SK-N-SH (cell line): ENCODE measurements at regions of chr12 and their contacts with region 1.

Region 1: DNA sequence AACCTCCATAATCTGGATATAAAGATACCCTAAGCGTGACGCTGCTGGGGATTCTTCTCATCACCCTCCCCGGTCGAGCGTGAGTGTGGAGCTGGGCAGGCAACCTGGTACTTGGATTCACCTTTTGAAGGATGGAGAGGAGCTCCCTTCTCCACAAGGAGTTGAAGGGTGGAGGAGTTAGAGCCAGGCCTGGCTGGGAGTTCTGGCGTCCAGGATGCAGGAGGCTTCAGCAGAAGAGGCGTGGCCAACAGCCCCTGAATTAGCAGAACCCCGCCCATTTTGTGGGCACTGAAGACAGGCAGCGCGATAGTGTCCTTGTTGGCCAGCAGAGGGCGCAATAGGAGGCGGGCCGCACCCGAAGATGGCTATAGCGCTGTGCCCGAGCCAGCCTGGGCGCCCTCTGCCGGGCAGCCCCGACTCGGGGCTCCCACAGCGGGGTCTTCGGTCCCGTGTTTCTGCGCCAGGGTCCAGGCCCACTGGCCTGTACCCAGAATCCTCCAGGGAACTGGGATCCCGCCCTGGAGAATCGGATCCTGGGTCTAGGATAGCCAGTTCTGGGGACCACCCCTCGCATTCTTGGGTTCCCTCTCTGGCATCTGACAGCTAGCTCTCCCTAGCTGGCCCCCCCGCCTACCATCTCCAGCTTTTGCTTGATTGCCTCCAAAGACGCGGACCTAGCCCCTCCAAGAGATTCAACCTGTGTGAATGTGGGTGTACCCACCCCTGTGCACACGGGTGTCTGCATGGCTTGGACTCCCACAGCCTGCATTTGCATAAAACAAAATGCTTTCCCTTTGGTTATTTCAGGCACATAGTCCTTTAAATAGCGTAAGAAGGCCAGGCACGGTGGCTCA is 26.0 kb upstream of the SMUG1 start:
- DNase-seq: peak; percentile 92
- H3K4me3 ChIP-seq: peak overlapping the region; percentile 41 to 62
- H3K27ac ChIP-seq: no peak overlapping the region
- H3K4me1 ChIP-seq: peaks cover 0 to 16% of the 10 kb centered on the region in 2 experiments; a peak in 1 of 4 replicates
- H3K27me3 ChIP-seq: no peaks in the 10 kb centered on the region
- CTCF ChIP-seq: peak; percentile 99
- EP300 ChIP-seq: no peak
- RAD21 ChIP-seq: peak; percentile 62

Region 2: DNA sequence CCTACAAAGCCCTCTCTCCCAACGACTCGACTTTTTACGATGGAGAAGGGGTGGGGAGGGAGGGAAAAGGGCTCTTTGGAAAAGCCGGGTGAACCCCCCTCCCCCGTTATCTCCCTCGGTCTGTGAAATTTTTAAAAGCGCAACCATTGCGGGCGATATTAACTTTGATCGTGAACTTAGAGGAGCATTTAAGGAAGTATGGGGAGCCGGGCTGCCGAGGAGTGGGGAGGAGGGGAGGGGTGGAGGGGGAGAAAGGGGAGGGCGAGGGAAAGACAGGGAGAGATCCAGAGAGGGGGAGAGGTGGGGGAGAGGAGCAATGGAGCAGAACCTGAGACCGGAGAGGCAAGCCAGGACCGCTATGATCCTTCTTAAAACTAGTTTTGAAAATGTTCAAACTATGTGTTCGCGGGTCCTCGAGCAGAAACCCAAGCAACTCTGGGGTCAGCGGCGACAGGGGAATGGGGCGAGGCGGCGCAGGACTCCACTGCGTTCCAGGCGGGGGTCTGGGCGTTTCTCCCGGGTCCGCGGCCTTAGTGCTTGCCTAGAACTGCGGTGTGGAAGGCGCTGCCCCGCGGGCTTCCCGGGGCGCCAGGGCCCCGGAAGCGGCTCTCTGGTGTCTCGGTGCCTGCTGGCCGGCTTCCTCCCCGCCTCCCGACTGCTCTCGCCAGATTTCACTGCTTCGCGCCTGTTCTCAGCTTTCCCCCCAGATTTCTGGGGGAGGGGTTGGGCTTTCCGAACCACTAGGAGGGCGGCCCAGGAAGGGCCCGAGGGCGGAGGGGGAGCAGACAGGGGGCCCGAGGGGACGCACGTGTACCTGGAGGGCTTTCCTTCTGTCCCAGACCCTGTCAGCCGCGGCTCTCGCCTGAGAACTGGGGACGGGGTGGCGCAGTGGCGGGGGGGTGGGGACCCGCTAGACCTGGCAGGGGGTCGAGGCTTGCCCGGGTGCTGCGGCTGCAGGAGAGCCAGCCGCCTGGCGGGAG is 240.4 kb before region 1 on chr12 and contains the start of gene HOTAIR:
- CTCF ChIA-PET with region 1: interaction called, 15 read pairs
- POLR2A ChIA-PET with region 1: no interaction called
- DNase-seq: peak; percentile 63
- H3K4me3 ChIP-seq: no peak within 1 kb of the TSS; a peak in 1 of 4 replicates
- H3K27ac ChIP-seq: no peak within 1 kb of the TSS
- H3K4me1 ChIP-seq: peaks cover 0 to 2% of the 10 kb centered on the region in 2 experiments; a peak in 2 of 4 replicates
- H3K27me3 ChIP-seq: peaks cover 98% of the 10 kb centered on the region
- CTCF ChIP-seq: no peak
- EP300 ChIP-seq: no peak
- RAD21 ChIP-seq: no peak
- polyA plus RNA-seq, gene HOTAIR: not detected in 2 replicates

Region 3: DNA sequence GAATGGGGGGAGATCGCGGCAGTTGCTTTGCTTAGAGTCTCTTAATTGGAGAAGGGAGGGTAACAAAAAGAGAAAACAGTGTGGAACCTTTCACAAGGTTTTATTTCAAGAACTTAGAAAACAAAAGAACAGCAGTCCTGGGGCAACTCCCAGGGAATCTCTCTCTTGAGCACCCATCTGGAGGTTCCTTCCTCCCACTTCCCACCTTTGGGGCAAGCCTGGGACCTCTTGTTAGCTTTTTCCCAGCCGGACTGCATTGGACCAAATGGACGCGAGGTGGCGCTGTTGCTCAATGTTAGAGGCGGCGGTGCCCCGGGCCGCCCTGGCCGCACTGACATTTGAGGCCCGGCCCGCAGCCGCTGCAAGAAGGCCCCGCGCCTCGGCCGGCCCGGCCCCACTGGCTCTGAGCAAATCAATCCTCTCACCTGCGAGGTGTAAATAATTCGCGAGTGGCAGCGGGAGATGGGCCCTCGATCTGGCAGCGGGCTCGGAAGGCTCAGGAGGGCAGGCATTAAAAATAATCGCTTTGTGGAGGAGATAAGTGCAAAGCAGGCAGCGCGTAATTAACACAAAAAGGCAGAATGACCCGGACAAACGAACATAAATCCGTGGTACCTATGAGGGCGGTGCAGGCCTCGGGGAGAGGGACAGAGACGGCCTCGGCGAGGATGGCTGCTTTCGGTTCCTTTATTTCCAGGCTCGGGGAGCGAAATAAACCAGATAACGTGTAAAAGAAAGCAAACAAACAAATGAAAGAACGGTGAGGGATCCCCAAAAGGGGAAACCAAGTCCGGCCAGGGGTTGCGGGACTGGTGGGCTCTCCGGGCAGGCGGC is 208.7 kb before region 1 on chr12:
- CTCF ChIA-PET with region 1: interaction called, 432 read pairs
- POLR2A ChIA-PET with region 1: interaction called, 3 read pairs
- DNase-seq: peak; percentile 93
- H3K4me3 ChIP-seq: no peak overlapping the region
- H3K27ac ChIP-seq: no peak overlapping the region
- H3K4me1 ChIP-seq: peaks cover 0 to 23% of the 10 kb centered on the region in 2 experiments; a peak in 1 of 4 replicates
- H3K27me3 ChIP-seq: no peaks in the 10 kb centered on the region
- CTCF ChIP-seq: peak; percentile 89
- EP300 ChIP-seq: no peak
- RAD21 ChIP-seq: peak; percentile 94

Region 4: GRCh38 chr12:54032627-54033100 is 182.1 kb before region 1 on chr12 and contains the start of gene HOXC5:
- CTCF ChIA-PET with region 1: interaction called, 195 read pairs
- POLR2A ChIA-PET with region 1: no interaction called
- DNase-seq: peak; percentile 93
- H3K4me3 ChIP-seq: peak within 1 kb of the TSS; percentile 52 to 60
- H3K27ac ChIP-seq: peak within 1 kb of the TSS in 1 of 2 experiments; percentile 93; a peak in 3 of 4 replicates
- H3K4me1 ChIP-seq: peaks cover 0 to 41% of the 10 kb centered on the region in 2 experiments; a peak in 1 of 4 replicates
- H3K27me3 ChIP-seq: no peaks in the 10 kb centered on the region
- CTCF ChIP-seq: peak; percentile 94
- EP300 ChIP-seq: 0 out of 4 replicates have a peak, but pooled peaks of 1 of the 2 experiments have one; percentile 32
- RAD21 ChIP-seq: peak; percentile 99
- polyA plus RNA-seq, gene HOXC5: 1.5 and 2.1 TPM in 2 replicates

Region 5: GRCh38 chr12:54201001-54201794 is 13.6 kb before region 1 on chr12:
- CTCF ChIA-PET with region 1: interaction called, 80 read pairs
- POLR2A ChIA-PET with region 1: no interaction called
- DNase-seq: peak; percentile 88
- H3K4me3 ChIP-seq: peak overlapping the region in 1 of 2 experiments; percentile 16; a peak in 1 of 4 replicates
- H3K27ac ChIP-seq: no peak overlapping the region
- H3K4me1 ChIP-seq: peaks cover 5 to 13% of the 10 kb centered on the region in 2 experiments; a peak in 2 of 4 replicates
- H3K27me3 ChIP-seq: peaks cover 16% of the 10 kb centered on the region; the same call in 1 of the 2 replicates
- CTCF ChIP-seq: peak; percentile 92
- EP300 ChIP-seq: no peak
- RAD21 ChIP-seq: peak; percentile 85

Region 6: DNA sequence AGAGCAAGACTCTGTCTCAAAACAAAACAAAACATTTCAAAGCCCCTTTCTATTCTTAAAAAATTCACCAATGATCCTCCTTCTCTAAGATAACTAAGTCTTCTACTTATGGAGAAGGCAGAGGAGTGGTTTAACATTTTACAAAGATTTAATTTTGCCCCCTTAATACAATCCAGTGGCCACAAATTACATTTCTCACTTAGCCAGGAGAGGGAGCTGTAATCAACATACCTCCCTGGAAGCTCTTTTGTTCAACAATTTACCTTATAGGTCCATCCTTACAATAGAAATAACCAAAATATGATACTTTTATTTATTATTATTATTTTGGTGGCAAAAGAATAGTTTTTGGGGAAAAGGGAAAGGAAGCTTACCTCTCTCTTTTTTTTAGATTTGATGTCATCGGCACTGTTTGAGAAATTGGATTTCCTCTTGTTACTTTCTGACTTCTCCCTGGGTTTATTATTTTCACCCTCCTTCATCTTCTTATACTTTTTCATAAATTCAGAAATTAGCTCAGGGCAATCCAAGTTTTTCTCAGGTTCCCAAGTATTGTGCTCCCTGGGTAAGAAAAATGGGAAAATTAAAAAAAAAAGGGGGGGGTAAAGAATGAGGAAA is 37.0 kb after region 1 on chr12:
- CTCF ChIA-PET with region 1: interaction called, 36 read pairs
- POLR2A ChIA-PET with region 1: no interaction called
- DNase-seq: peak; percentile 73
- H3K4me3 ChIP-seq: no peak overlapping the region
- H3K27ac ChIP-seq: peak overlapping the region in 1 of 2 experiments; percentile 43; a peak in 2 of 4 replicates
- H3K4me1 ChIP-seq: peaks cover 0 to 4% of the 10 kb centered on the region in 2 experiments; a peak in 2 of 4 replicates
- H3K27me3 ChIP-seq: no peaks in the 10 kb centered on the region
- CTCF ChIP-seq: peak; percentile 87
- EP300 ChIP-seq: no peak
- RAD21 ChIP-seq: peak; percentile 78

Region 7: GRCh38 chr12:54359033-54359761 is 144.4 kb after region 1 on chr12:
- CTCF ChIA-PET with region 1: interaction called, 63 read pairs
- POLR2A ChIA-PET with region 1: interaction called, 3 read pairs
- DNase-seq: peak; percentile 91
- H3K4me3 ChIP-seq: peak overlapping the region; percentile 55 to 76
- H3K27ac ChIP-seq: peak overlapping the region; percentile 79 to 99
- H3K4me1 ChIP-seq: peaks cover 27 to 47% of the 10 kb centered on the region in 2 experiments
- H3K27me3 ChIP-seq: no peaks in the 10 kb centered on the region
- CTCF ChIP-seq: no peak
- EP300 ChIP-seq: peak; percentile 68 to 89; a peak in 3 of 4 replicates
- RAD21 ChIP-seq: no peak